Transverse colon (tissue), 4 donors: ENCODE measurements at regions of chr13 and their contacts with region 1.

Region 1: DNA sequence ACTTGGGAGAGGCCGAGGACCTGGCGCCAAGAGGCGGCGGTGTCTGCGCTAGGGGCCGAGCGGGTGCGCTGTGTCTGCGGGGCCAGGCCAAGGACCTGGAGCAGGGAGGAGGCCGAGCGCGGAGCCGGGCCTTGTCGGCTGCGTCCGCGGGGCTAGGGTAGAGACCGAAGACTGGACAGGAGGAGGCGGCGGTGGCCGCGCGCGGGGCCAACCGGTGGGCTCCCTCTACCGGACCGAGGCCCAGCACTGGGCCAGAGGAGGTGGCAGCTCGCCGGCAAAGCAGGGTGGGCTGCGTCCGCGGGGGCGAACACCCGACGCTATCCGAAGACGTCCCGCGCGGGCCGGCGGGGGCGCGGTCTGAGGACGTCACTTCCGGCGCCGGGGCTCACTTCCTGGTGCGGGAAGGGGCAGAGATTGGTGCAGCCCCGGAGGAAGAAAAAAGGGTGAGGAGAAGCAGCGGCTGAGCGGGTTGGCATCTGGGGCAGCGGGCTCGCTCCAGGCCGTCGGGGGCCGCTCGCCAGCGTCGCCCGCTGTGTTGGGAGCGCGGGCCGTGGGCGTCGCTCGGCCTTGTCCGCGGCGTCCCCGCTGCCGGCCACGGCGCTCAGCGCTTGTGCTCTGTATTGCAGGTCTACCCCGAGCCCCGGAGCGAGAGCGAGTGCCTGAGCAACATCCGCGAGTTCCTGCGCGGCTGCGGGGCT is 38.3 kb downstream of the ARHGEF7 start:
- DNase-seq: peak; percentile 94
- H3K4me3 ChIP-seq: peak overlapping the region; percentile 67 to 95 (median 78)
- H3K27ac ChIP-seq: peak overlapping the region; percentile 97 to 99 (median 99)
- H3K4me1 ChIP-seq: peaks cover 15 to 30% (median 20%) of the 10 kb centered on the region in 4 donors
- H3K27me3 ChIP-seq: no peaks in the 10 kb centered on the region
- CTCF ChIP-seq: peak in 2 of 5 experiments; percentile 9 to 43
- EP300 ChIP-seq: no peak
- POLR2A ChIP-seq: peak; percentile 93

Region 2: DNA sequence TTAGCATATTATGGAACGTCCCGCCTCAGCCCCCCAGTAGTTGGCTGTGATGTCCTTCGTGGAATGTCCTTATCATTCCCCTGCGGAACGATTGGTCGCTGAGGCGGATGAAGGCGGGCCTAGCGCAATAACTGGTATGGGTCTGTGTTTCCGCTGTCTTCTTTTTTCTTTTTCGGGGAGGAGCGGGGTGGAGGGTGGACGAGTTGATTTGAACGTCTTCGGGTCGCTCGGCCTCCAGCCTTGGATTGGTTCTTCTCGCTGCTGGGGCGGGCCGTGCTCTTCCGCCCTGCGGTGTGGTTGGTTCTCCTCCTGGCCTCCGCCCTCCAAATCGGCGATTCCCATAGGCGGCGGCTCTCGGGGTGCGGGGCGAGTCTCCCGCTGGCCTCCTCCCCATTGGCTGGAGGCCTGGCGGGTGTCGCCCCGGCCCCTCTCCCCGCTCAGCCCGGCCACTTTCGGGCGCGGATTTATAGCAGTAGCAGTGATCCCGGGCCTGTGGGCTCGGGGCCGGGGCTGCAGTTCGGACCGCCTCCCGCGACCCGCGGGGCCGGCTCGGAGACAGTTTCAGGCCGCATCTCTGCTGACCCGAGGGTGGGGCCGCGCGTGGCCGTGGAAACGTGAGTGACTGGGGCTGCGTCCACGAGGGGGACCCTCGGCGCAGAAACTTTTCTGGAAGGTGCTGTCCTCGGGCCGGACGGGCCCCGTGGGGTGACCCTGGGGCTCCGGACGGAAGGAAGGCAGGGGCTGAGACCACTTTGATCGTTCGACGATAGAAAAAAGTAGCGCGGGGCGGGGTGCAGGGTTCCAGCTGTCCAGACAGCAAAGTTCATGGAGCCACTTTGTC is 437.8 kb before region 1 on chr13:
- in situ Hi-C with region 1: loop called in 1 of 4 experiments (anchors 25 kb)
- intact Hi-C with region 1: no loop called
- DNase-seq: peak; percentile 98
- H3K4me3 ChIP-seq: peak overlapping the region; percentile 47 to 92 (median 85)
- H3K27ac ChIP-seq: peak overlapping the region; percentile 99 to 100 (median 100)
- H3K4me1 ChIP-seq: peaks cover 11 to 34% (median 30%) of the 10 kb centered on the region in 4 donors
- H3K27me3 ChIP-seq: no peaks in the 10 kb centered on the region
- CTCF ChIP-seq: peak in 2 of 5 experiments; percentile 20 to 46
- EP300 ChIP-seq: no peak
- POLR2A ChIP-seq: no peak

Region 3: GRCh38 chr13:111216166-111216960 is 62.9 kb after region 1 on chr13:
- in situ Hi-C with region 1: loop called in 1 of 4 experiments (anchors 10 kb)
- intact Hi-C with region 1: loop called (anchors 10 kb)
- DNase-seq: peak; percentile 38
- H3K4me3 ChIP-seq: no peak overlapping the region
- H3K27ac ChIP-seq: no peak overlapping the region
- H3K4me1 ChIP-seq: peaks cover 0 to 29% (median 4%) of the 10 kb centered on the region in 4 donors
- H3K27me3 ChIP-seq: no peaks in the 10 kb centered on the region
- CTCF ChIP-seq: peak in 4 of 5 experiments; percentile 28 to 36 (median 33)
- EP300 ChIP-seq: no peak
- POLR2A ChIP-seq: no peak

Region 4: GRCh38 chr13:111228262-111229144 is 75.1 kb after region 1 on chr13:
- in situ Hi-C with region 1: loop called in 1 of 4 experiments (anchors 10 kb)
- intact Hi-C with region 1: no loop called
- DNase-seq: no peak
- H3K4me3 ChIP-seq: no peak overlapping the region
- H3K27ac ChIP-seq: no peak overlapping the region
- H3K4me1 ChIP-seq: peaks cover 0 to 7% (median 2%) of the 10 kb centered on the region in 4 donors
- H3K27me3 ChIP-seq: no peaks in the 10 kb centered on the region
- CTCF ChIP-seq: no peak
- EP300 ChIP-seq: no peak
- POLR2A ChIP-seq: no peak

Region 5: GRCh38 chr13:111251646-111252445 is 98.4 kb after region 1 on chr13:
- in situ Hi-C with region 1: loop called in 1 of 4 experiments (anchors 25 kb)
- intact Hi-C with region 1: no loop called
- DNase-seq: no peak
- H3K4me3 ChIP-seq: no peak overlapping the region
- H3K27ac ChIP-seq: no peak overlapping the region
- H3K4me1 ChIP-seq: peaks cover 0 to 11% (median 0%) of the 10 kb centered on the region in 4 donors
- H3K27me3 ChIP-seq: no peaks in the 10 kb centered on the region
- CTCF ChIP-seq: no peak
- EP300 ChIP-seq: no peak
- POLR2A ChIP-seq: no peak

Region 6: DNA sequence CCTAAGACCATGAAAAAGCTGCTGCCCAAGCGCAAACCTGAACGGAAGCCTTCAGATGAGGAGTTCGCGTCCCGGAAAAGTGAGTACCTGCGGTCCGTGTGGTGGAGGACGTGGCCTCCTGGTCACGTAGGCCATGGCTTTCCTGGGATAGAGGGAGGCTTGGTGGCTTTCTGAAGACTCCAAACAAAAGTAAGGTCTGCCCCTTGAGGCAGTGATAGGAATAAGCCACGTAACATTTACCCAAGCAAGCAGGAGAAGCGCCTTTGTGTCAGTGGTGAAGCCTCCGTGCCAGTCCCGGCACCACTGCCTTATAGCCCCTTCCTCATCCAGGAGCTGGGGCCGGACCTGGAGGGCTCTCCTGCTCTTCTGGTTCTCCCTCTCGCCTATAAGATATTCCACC is 132.7 kb after region 1 on chr13:
- in situ Hi-C with region 1: no loop called
- intact Hi-C with region 1: no loop called
- DNase-seq: no peak
- H3K4me3 ChIP-seq: no peak overlapping the region
- H3K27ac ChIP-seq: no peak overlapping the region
- H3K4me1 ChIP-seq: peaks cover 0 to 20% (median 5%) of the 10 kb centered on the region in 4 donors
- H3K27me3 ChIP-seq: no peaks in the 10 kb centered on the region
- CTCF ChIP-seq: no peak
- EP300 ChIP-seq: no peak
- POLR2A ChIP-seq: no peak